Activated naive CD4-positive, alpha-beta T cell treated with anti-CD3 and anti-CD28 coated beads for 36 hours (primary cell): ENCODE measurements at regions of chr6 and their contacts with region 1.

Region 1: GRCh38 chr6:27753668-27754407 is 158.4 kb downstream of the OR2B2 start:
- DNase-seq: peak; percentile 88
- H3K4me3 Mint-ChIP-seq: peak overlapping the region; percentile 77
- H3K27ac Mint-ChIP-seq: peak overlapping the region; percentile 82
- H3K4me1 Mint-ChIP-seq: peaks cover 28% of the 10 kb centered on the region
- H3K27me3 Mint-ChIP-seq: no peaks in the 10 kb centered on the region

Region 2: DNA sequence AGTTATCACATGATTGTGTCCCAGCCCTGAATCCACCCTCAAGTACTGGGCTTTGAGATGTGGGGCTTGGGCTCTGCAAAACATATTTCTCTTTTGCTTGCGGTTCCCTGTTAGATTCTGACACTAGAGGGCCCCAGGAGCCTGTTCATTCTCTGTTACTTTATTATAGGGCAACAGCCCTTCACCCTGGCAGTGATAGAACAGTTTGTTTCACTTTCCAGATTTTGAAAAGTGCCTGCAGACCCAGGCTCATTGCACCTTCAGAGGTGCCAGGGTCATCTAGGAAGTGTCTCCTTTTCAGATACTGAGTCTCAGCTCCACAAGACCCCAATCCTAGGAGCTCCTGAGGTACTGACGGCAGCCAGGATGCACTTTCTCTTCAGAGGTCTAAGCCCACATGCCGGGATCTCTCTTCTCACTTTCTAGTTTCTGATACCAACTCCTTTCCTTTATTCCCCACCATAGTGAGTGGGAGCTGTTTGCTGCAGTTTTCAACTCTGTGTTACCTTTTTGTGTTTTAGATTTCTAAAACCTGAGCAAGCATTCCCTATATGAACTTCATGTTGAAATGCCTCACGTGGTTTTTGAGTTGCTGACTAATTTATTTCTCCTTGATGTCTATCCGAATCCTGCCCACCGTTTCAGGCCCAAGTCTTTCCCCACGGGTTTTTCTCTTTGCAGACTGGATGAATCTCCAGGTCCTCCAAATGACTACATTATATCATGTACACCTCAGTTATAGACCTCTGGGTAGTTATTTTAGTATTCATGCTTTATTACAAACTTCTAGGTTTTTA is 1146.2 kb before region 1 on chr6:
- CTCF ChIA-PET with region 1: no interaction called
- intact Hi-C with region 1: loop called (anchors 10 kb)
- DNase-seq: peak; percentile 79
- H3K4me3 Mint-ChIP-seq: peak overlapping the region; percentile 52
- H3K27ac Mint-ChIP-seq: no peak overlapping the region
- H3K4me1 Mint-ChIP-seq: peaks cover 15% of the 10 kb centered on the region
- H3K27me3 Mint-ChIP-seq: peaks cover 1% of the 10 kb centered on the region

Region 3: DNA sequence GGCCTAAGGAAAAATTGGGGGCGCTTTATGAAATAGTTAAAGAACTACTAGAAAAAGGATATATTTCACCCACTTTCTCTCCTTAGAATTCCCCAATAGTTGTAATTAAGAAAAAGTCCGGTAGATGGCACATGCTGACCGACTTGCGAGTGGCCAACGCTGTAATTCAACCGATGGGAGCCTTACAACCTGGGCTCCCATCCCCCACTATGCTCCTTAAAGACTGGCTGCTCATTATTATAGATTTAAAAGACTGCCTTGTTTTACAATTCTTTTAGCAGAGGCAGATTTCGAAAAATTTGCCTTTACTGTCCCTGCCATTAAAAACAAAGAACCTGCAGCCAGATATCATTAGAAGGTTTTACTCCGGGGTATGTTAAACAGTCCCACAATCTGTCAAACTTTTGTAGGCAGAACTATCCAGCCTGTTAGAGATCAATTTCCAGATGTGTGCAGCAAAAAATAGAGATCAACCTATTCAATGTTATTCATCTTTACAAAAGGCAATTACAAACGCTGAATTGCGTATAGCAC is 564.9 kb before region 1 on chr6:
- CTCF ChIA-PET with region 1: interaction called, 4 read pairs
- intact Hi-C with region 1: loop called (anchors 1 kb)
- DNase-seq: peak; percentile 67
- H3K4me3 Mint-ChIP-seq: peak overlapping the region; percentile 84
- H3K27ac Mint-ChIP-seq: no peak overlapping the region
- H3K4me1 Mint-ChIP-seq: peaks cover 9% of the 10 kb centered on the region
- H3K27me3 Mint-ChIP-seq: no peaks in the 10 kb centered on the region

Region 4: DNA sequence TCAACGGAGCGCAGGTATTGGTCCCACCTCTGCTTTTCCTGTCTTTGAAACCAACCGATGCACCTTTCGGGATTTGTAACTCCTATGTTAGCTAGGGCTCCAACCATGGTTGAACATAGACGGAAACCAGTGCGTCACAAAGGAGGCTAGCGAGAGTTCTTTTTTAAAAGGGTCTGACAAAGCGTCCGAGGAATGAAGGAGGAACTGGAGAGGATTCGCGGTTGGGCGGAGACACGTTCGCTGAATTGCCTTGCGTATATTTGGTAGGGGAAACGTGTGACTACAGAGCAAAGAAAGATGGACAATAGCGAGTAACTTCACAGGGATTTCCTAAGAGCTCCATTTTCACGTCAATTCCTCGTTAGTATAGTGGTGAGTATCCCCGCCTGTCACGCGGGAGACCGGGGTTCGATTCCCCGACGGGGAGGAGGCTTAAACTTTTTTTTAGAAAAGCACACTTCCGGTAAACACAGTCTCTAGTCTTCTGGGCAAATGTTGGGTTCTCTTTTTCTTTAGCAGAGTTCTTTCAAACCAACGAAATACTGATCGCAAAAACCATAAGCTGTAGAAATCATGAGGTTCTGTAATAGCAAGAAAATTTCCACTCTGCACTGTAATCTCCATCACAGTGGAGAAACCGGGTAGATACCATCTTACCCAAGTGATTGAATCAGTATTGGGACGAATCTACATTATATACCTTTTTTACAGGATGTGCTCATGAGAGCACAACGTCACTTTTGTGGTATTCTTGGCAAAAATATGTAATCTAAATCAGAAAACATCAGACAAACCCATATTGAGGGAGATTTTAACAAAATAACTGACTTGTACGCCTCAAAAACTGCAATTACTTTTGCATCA is 274.3 kb before region 1 on chr6:
- CTCF ChIA-PET with region 1: no interaction called
- intact Hi-C with region 1: loop called (anchors 1 kb)
- DNase-seq: peak; percentile 90
- H3K4me3 Mint-ChIP-seq: no peak overlapping the region
- H3K27ac Mint-ChIP-seq: no peak overlapping the region
- H3K4me1 Mint-ChIP-seq: peaks cover 6% of the 10 kb centered on the region
- H3K27me3 Mint-ChIP-seq: no peaks in the 10 kb centered on the region

Region 5: GRCh38 chr6:27672113-27672799 is 81.6 kb before region 1 on chr6:
- CTCF ChIA-PET with region 1: no interaction called
- intact Hi-C with region 1: loop called (anchors 1 kb)
- DNase-seq: peak; percentile 72
- H3K4me3 Mint-ChIP-seq: peak overlapping the region; percentile 44
- H3K27ac Mint-ChIP-seq: peak overlapping the region; percentile 66
- H3K4me1 Mint-ChIP-seq: peaks cover 34% of the 10 kb centered on the region
- H3K27me3 Mint-ChIP-seq: peaks cover 74% of the 10 kb centered on the region

Region 6: GRCh38 chr6:27772261-27773001 is 18.6 kb after region 1 on chr6:
- CTCF ChIA-PET with region 1: interaction called, 22 read pairs
- intact Hi-C with region 1: loop called (anchors 2 kb)
- DNase-seq: peak; percentile 92
- H3K4me3 Mint-ChIP-seq: no peak overlapping the region
- H3K27ac Mint-ChIP-seq: no peak overlapping the region
- H3K4me1 Mint-ChIP-seq: peaks cover 6% of the 10 kb centered on the region
- H3K27me3 Mint-ChIP-seq: peaks cover 16% of the 10 kb centered on the region